Left cardiac atrium (tissue), 4 donors: ENCODE measurements at regions of chr2 and their contacts with region 1.

Region 1: DNA sequence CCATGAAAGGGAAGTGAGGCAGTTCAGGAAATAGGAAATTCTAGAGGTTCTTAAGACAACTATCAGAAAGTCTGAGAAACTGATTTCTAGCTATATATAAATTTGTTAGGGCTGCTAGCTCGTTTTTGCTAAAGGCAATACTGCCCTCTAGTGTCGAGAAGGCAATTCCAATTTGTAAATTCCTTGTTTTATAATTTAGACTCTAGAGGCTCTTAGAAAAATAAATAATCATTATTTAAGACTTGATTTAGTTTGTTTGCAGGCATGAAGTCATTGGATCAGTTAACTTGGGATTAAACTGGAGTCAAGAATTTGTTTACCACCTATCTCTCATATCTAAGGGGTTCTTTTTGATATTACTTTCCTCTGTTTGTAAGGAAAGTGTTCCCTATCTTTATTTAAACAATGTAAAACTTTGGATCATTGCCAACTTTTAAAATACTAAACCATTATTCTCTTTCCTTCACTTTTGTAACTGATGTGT is 66.2 kb downstream of the ACVR2A start:
- DNase-seq: no peak
- ATAC-seq: no peak

Region 2: GRCh38 chr2:146734042-146734820 is 1176.8 kb before region 1 on chr2:
- intact Hi-C with region 1: loop called in 1 of 2 experiments (anchors 5 kb)
- DNase-seq: no peak
- ATAC-seq: peak; percentile 49 to 55

Region 3: GRCh38 chr2:147082850-147083522 is 828.0 kb before region 1 on chr2:
- intact Hi-C with region 1: loop called (anchors 2 to 5 kb)
- DNase-seq: no peak
- ATAC-seq: peak; percentile 51 to 70

Region 4: GRCh38 chr2:147739508-147739907 is 171.5 kb before region 1 on chr2:
- intact Hi-C with region 1: no loop called
- DNase-seq: no peak
- ATAC-seq: no peak

Region 5: GRCh38 chr2:147925886-147926285 is 14.9 kb after region 1 on chr2:
- intact Hi-C with region 1: no loop called
- DNase-seq: no peak
- ATAC-seq: no peak

Region 6: DNA sequence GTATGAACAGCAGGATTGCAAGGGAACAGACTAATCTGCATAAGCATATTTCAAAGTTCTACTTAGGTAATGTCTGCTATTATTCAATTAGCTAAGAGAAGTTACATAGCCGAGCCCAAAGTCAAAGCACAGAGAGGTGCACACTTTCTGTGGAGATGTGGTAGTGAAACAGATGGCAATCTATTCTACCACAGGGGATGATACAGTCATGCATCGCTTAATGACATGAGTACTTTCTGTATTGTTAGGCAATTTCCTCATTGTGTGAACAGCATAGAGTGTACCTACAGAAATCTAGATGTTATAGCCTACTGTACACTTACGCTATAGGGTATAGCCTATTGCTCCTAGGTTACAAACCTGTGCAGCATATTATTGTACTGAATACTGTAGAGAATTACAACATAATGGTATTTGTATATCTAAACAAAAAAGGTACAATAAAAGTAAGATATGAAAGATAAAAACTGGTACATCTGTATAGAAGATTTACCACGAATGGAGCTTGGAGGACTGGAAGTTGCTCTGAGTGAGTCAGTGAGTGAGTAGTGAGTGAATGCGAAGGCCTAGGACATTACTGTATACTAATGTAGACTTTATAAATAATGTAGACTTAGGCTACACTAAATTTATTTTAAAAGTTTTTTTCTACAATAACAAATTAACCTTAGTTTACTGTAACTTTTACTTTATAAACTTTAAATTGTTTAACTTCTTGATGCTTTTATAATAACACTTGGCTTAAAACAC is 307.5 kb after region 1 on chr2:
- intact Hi-C with region 1: no loop called
- DNase-seq: no peak
- ATAC-seq: no peak